Activated CD4-positive, alpha-beta T cell treated with anti-CD3 and anti-CD28 coated beads for 36 hours (primary cell): ENCODE measurements at regions of chr2 and their contacts with region 1.

Region 1: GRCh38 chr2:30165050-30165520 is 18.3 kb downstream of the YPEL5 start:
- DNase-seq: peak; percentile 77
- ATAC-seq: peak; percentile 100
- H3K4me3 Mint-ChIP-seq: no peak overlapping the region
- H3K27ac Mint-ChIP-seq: no peak overlapping the region
- H3K4me1 Mint-ChIP-seq: peaks cover 10% of the 10 kb centered on the region
- H3K27me3 Mint-ChIP-seq: no peaks in the 10 kb centered on the region

Region 2: DNA sequence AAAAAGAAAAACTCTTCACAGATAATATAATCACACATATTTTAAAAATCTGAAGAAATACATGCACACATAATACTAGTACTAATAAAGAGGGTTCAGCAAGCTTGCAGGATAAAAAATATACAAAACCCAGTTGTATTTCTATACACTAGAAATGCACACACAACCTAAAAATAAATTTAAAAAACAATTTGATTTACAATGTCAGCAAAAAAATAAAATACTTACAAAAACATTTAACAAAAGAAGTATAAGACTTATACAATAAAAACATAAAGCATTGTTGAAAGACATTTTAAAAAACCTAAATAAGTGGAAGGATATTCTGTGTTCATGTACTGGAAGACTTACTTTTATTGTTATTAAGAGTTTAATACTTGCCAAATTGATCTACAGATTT is 162.0 kb before region 1 on chr2:
- CTCF ChIA-PET with region 1: no interaction called
- POLR2A ChIA-PET with region 1: no interaction called
- intact Hi-C with region 1: no loop called
- DNase-seq: no peak
- ATAC-seq: no peak
- H3K4me3 Mint-ChIP-seq: no peak overlapping the region
- H3K27ac Mint-ChIP-seq: no peak overlapping the region
- H3K4me1 Mint-ChIP-seq: no peaks in the 10 kb centered on the region
- H3K27me3 Mint-ChIP-seq: peaks cover 3% of the 10 kb centered on the region

Region 3: DNA sequence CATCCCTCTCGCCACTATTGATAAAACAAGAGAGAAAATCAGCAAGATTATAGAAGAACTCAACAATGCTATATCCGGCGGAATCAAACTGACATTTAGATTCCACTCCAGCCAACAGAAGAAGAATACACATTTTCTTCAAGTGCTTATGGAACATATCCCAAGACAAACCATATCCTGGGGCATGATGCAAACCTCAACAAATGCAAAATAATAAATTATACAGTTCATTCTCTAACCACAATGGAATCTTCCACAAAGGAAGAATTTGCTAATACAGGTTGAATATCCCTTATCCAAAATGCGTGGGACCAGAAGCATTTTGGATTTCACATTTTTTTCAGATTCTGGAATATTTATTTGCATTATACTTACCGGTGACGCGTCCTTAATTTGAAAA is 69.7 kb before region 1 on chr2:
- CTCF ChIA-PET with region 1: interaction called, 19 read pairs
- POLR2A ChIA-PET with region 1: no interaction called
- intact Hi-C with region 1: loop called (anchors 2 kb)
- DNase-seq: no peak
- ATAC-seq: no peak
- H3K4me3 Mint-ChIP-seq: no peak overlapping the region
- H3K27ac Mint-ChIP-seq: no peak overlapping the region
- H3K4me1 Mint-ChIP-seq: no peaks in the 10 kb centered on the region
- H3K27me3 Mint-ChIP-seq: peaks cover 20% of the 10 kb centered on the region

Region 4: DNA sequence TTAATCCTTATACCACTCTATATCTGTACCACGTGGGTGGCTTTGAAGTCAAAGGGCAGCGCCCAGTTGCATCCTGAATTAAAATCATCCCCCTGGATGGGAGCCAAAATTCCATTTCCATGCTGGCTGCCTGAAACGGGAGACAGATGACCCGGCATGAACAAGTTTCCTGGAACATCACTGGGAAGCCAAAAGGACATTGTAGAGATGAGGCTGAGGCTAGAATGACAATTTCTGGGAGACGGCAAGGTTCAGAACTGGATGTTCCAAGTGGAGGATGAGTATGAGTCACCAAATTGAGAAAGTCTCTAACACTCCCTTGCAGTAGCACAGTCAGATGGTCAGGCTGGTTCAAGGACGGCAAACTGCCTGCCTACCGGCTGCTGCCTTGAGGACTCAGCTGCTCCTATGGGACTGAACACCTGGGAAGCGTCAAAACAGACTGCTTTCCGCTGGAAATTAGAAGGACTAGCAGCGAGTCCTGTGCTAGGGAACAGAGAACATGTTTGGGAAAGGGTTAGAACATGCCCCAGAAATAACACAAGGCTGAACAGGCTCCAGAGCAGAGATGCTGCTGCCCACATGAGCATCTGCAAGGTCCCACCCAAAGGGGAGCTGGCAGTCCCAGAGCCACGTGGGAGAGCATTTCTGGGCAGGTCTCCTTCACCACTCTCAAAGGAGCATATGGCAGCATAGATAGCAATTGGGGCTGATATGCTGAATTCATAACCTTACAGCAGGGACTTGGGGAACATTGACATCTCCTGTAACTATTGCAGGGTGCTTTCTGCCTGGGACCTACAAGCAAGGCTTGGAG is 13.7 kb after region 1 on chr2:
- CTCF ChIA-PET with region 1: interaction called, 19 read pairs
- POLR2A ChIA-PET with region 1: no interaction called
- intact Hi-C with region 1: no loop called
- DNase-seq: no peak
- ATAC-seq: no peak
- H3K4me3 Mint-ChIP-seq: no peak overlapping the region
- H3K27ac Mint-ChIP-seq: no peak overlapping the region
- H3K4me1 Mint-ChIP-seq: no peaks in the 10 kb centered on the region
- H3K27me3 Mint-ChIP-seq: no peaks in the 10 kb centered on the region

Region 5: GRCh38 chr2:30225131-30225762 is 60.2 kb after region 1 on chr2:
- CTCF ChIA-PET with region 1: interaction called, 14 read pairs
- POLR2A ChIA-PET with region 1: interaction called, 3 read pairs
- intact Hi-C with region 1: loop called in 1 of 2 experiments (anchors 2 kb)
- DNase-seq: peak; percentile 58
- ATAC-seq: peak; percentile 64
- H3K4me3 Mint-ChIP-seq: peak overlapping the region; percentile 77
- H3K27ac Mint-ChIP-seq: peak overlapping the region; percentile 93
- H3K4me1 Mint-ChIP-seq: peaks cover 74% of the 10 kb centered on the region
- H3K27me3 Mint-ChIP-seq: peaks cover 9% of the 10 kb centered on the region

Region 6: DNA sequence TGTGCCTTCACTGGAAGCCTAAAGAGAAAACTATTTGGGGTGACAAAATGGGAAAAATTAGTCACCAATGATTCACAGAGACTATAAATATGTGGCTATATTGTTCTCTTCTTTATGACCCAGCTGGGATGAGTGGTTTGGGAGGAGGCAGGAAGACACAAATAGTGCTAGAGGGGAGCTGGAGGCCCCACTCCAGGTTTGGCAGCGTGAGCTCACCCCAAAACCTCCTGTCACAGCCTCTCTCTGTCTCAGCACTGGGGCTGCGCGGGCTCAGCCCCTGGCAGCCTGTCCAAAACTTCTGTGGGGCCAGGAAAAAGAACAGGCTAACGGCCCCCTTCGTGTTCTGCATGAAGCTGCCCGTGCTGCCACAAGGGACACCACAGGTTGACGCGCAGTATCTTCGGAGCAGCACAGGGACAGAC is 208.8 kb after region 1 on chr2:
- CTCF ChIA-PET with region 1: interaction called, 12 read pairs
- POLR2A ChIA-PET with region 1: interaction called, 3 read pairs
- intact Hi-C with region 1: no loop called
- DNase-seq: peak; percentile 32
- ATAC-seq: no peak
- H3K4me3 Mint-ChIP-seq: no peak overlapping the region
- H3K27ac Mint-ChIP-seq: peak overlapping the region; percentile 44
- H3K4me1 Mint-ChIP-seq: peaks cover 39% of the 10 kb centered on the region
- H3K27me3 Mint-ChIP-seq: no peaks in the 10 kb centered on the region

Region 7: DNA sequence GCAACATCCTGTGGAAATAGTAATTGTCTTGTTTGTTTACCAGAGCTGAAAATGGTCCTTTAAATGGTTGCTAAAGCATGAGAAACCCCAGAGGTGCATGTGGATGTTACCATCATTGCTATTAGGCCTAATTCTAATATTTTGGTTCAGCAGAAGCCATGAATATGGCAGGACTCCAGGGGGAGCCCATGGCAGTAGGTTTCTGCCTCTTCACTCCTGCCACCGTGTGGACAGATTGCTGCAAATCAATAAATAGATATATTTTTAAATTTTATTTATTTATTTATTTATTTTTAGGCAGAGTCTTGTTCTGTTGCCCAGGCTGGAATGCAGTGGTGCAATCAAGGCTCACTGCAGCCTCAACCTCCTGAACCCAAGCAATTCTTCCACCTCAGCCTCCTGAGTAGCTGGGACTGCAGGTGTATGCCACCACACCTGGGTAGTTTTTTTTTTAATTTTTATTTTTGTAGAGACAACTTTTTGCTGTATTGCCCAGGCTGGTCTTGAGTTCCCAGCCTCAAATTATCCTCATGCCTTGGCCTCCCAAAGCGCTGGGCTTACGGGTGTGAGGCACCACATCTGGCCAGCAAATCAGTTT is 697.1 kb after region 1 on chr2:
- CTCF ChIA-PET with region 1: interaction called, 3 read pairs
- POLR2A ChIA-PET with region 1: no interaction called
- intact Hi-C with region 1: loop called in 1 of 2 experiments (anchors 2 kb)
- DNase-seq: peak; percentile 69
- ATAC-seq: no peak
- H3K4me3 Mint-ChIP-seq: no peak overlapping the region
- H3K27ac Mint-ChIP-seq: no peak overlapping the region
- H3K4me1 Mint-ChIP-seq: peaks cover 8% of the 10 kb centered on the region
- H3K27me3 Mint-ChIP-seq: peaks cover 8% of the 10 kb centered on the region